MCF 10A (cell line): ENCODE measurements at regions of chr19 and their contacts with region 1.

Region 1: DNA sequence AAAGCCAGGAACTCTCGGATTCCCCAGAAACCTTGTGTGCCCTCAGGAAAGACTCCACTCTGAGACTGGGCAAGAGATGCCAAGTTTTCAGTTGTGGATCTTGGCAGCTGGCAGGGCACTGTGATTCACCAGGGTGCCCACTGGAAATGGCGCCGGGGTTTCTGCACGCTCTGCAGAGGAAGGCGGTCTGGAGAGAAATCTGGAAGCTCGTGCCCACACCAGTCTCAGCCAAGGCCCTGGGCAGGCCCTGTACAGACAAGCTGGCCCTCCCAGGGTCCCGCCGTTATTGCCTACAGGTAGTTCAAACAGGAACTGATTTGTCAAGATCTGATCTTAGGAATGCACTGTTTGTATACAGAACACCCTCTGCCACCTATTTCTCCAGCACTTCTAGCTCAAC is 4.9 kb downstream of the NAPA start:
- DNase-seq: peak; percentile 90
- H3K4me3 Mint-ChIP-seq: peak overlapping the region; percentile 64
- H3K27ac Mint-ChIP-seq: peak overlapping the region; percentile 46
- H3K4me1 Mint-ChIP-seq: peaks cover 47% of the 10 kb centered on the region
- H3K27me3 Mint-ChIP-seq: no peaks in the 10 kb centered on the region
- CTCF ChIP-seq: no peak

Region 2: DNA sequence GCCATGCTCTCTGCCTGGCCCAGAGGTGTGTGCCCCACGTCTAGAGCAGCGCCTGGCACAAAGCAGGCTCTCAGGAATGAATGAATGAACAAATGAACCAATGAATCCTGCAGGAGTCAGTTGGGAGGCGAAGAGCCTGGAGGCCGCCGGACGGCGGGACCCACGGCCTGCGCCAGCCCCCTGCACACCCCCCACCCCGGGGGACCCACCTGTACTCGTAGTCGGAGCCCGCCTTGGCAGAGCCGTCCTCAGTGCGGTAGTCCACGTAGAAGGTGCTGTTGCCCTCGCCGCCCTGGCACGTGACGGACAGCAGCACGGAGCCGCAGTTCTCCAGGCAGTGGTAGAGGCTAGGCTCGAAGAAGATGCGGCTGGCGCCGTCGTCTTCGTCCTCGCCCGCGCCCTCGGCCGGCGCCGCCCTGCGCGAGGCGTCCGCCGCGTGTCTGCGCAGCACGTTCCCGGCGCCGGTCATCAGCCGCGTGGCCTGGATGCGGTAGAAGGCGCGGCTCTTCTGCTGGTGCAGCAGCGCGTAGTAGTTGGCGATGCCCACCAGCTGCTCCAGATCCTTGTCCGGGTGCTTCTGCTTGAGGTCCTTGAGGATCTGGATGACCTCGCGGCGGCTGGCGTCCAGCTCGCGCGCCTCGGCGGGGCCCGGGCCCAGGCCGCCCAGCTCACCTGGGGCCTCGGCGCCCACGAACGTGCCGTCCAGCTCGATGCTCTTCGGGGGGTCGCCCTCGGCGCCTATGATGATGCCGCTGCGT is 53.1 kb before region 1 on chr19:
- CTCF ChIA-PET with region 1: no interaction called
- POLR2A ChIA-PET with region 1: no interaction called
- intact Hi-C with region 1: no loop called
- DNase-seq: no peak
- H3K4me3 Mint-ChIP-seq: no peak overlapping the region
- H3K27ac Mint-ChIP-seq: no peak overlapping the region
- H3K4me1 Mint-ChIP-seq: no peaks in the 10 kb centered on the region
- H3K27me3 Mint-ChIP-seq: peaks cover 17% of the 10 kb centered on the region
- CTCF ChIP-seq: no peak

Region 3: GRCh38 chr19:47600246-47601179 is 90.5 kb after region 1 on chr19:
- CTCF ChIA-PET with region 1: interaction called, 9 read pairs
- POLR2A ChIA-PET with region 1: interaction called, 82 read pairs
- intact Hi-C with region 1: loop called (anchors 1 kb)
- DNase-seq: peak; percentile 100
- H3K4me3 Mint-ChIP-seq: peak overlapping the region; percentile 97
- H3K27ac Mint-ChIP-seq: peak overlapping the region; percentile 97
- H3K4me1 Mint-ChIP-seq: peaks cover 30% of the 10 kb centered on the region
- H3K27me3 Mint-ChIP-seq: no peaks in the 10 kb centered on the region
- CTCF ChIP-seq: no peak